Left cardiac atrium (tissue), 4 donors: ENCODE measurements at regions of chr7 and their contacts with region 1.

Region 1: GRCh38 chr7:117014673-117015133 is 61.4 kb downstream of the ST7 start:
- DNase-seq: peak; percentile 60
- ATAC-seq: peak; percentile 93 to 95

Region 2: DNA sequence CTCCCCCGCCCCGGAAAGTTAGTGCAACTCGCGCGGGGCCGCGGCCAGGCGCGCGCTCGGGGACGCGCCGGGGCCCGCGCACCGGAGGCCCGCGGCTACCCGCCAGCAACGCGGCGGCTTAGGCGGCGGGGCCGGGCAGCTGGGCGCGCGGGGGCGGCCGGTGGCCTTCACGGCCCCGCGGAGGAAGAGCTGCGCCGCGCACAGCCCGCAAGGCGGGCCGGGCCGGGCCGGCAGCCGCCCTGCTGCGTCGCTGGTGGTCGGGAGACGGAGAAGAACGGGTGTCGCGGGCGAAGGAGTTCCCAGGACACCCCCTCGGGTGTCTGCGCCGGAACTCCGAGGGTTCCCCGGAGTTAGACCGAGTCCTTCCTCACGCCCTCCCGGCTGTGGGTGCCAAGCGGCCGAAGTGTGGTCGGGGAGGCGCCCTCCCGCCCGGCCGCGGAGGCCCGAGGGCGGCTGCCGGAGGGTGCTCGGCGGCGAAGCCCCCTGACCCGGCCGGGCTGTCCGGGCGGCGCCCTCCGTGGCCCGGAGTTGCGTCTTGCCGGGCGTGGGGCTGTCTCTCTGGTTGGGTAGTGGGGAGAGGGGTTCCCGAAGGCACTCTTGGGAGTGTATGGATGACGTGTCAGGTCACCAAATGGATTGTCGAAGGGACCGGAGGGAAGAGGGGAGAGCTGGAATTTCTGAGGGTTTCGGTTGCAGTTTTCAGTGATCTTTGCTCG is 60.8 kb before region 1 on chr7:
- intact Hi-C with region 1: loop called in 1 of 2 experiments (anchors 10 kb)
- DNase-seq: peak; percentile 68
- ATAC-seq: peak; percentile 70 to 81

Region 3: GRCh38 chr7:117085275-117085674 is 70.6 kb after region 1 on chr7:
- intact Hi-C with region 1: no loop called
- DNase-seq: no peak
- ATAC-seq: no peak

Region 4: DNA sequence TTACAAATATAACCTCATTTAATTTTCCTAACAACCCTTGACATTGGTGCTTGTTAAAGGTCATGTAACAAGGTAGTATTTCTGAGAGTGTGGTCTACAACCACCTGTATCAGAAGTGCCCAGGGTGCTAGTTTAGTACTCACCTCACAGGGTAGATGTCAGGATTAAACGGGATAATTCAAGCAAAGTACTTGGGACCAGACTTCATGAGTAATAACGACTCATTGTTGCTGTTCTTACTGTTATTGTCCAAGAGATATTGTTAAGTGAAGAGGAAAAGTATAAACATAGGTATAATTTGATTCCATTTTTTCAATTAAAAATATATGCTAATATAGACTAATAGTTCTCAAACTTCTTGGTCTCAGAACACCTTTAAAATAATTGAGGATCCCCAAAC is 128.9 kb after region 1 on chr7:
- intact Hi-C with region 1: no loop called
- DNase-seq: no peak
- ATAC-seq: no peak

Region 5: DNA sequence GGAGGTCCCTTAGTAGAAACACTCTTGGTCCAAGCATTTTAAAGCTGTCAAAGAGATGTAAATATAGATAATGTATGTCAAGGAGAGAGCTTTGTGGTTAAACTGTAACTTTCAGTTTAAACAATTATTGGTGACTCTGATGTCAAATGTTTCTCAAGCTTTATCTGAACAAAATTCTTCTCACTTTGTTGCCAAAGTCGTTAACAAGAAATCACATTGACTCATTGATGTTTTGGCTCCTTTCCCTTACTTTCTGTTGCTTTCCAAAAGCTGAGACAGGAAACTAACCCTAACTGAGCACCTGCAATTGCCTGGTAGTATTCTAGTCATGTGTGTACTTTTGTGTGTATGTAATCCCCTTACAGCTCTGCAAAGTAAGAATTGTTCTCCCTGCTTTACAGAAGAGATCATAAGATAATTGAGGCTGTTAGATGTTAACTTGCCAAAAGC is 573.7 kb after region 1 on chr7:
- intact Hi-C with region 1: no loop called
- DNase-seq: no peak
- ATAC-seq: no peak